PC-9 (cell line): ENCODE measurements at regions of chr9 and their contacts with region 1.

Region 1: GRCh38 chr9:113410207-113410864 is at the starts of genes C9orf43 and POLE3:
- DNase-seq: peak; percentile 87 to 95
- H3K4me3 ChIP-seq: peak within 1 kb of the TSS; percentile 76
- H3K27ac ChIP-seq: peak within 1 kb of the TSS; percentile 89
- H3K4me1 ChIP-seq: peaks cover 18% of the 10 kb centered on the region
- H3K27me3 ChIP-seq: no peaks in the 10 kb centered on the region
- CTCF ChIP-seq: no peak
- total RNA-seq, gene C9orf43: 1.5 and 2.5 TPM in 2 replicates
- total RNA-seq, gene POLE3: 53.8 and 64.5 TPM in 2 replicates

Region 2: GRCh38 chr9:113221003-113221799 is 189.1 kb before region 1 on chr9 and contains the starts of genes FKBP15 and SLC31A1:
- CTCF ChIA-PET with region 1: interaction called, 5 read pairs
- POLR2A ChIA-PET with region 1: interaction called, 3 read pairs
- intact Hi-C with region 1: loop called (anchors 1 kb)
- DNase-seq: peak; percentile 95 to 99
- H3K4me3 ChIP-seq: peak within 1 kb of the TSS; percentile 79
- H3K27ac ChIP-seq: peak within 1 kb of the TSS; percentile 51
- H3K4me1 ChIP-seq: peaks cover 29% of the 10 kb centered on the region
- H3K27me3 ChIP-seq: no peaks in the 10 kb centered on the region
- CTCF ChIP-seq: no peak
- total RNA-seq, gene FKBP15: 23.3 and 33.5 TPM in 2 replicates
- total RNA-seq, gene SLC31A1: 24.9 and 27.2 TPM in 2 replicates

Region 3: GRCh38 chr9:113309204-113309813 is 101.0 kb before region 1 on chr9:
- CTCF ChIA-PET with region 1: interaction called, 3 read pairs
- POLR2A ChIA-PET with region 1: no interaction called
- intact Hi-C with region 1: loop called (anchors 1 kb)
- DNase-seq: peak; percentile 17 to 44
- H3K4me3 ChIP-seq: no peak overlapping the region
- H3K27ac ChIP-seq: no peak overlapping the region
- H3K4me1 ChIP-seq: no peaks in the 10 kb centered on the region; the same call in 1 of the 2 replicates
- H3K27me3 ChIP-seq: no peaks in the 10 kb centered on the region
- CTCF ChIP-seq: peak; percentile 82

Region 4: DNA sequence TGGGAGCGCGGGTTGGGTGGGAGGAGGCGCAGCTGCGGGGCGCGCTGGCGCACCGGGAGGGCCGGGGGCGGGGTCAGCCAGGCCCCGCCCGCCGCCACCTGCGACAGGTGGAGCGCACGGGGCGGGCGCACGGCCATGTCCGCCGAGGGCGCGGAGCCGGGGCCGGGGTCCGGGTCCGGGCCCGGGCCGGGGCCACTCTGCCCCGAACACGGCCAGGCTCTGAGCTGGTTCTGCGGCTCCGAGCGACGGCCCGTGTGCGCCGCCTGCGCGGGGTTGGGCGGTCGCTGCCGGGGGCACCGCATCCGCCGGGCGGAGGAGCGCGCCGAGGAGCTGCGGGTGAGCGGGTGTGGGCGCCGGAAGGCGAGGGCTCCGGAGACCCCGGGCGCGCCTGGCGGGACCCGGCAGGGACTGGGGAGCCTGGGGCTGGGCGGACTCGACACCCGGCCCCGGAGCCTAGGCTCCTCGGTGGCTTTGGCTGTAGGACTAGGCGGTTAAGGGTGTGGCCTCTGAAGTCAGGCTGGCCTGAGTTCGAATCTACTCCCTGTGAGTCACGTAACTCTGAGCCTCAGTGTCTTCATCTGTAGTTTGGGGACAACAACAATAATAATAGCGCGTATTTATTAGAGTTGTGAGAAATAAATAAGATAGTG is 60.8 kb before region 1 on chr9 and contains the start of gene BSPRY:
- CTCF ChIA-PET with region 1: interaction called, 4 read pairs
- POLR2A ChIA-PET with region 1: interaction called, 11 read pairs
- intact Hi-C with region 1: no loop called
- DNase-seq: peak in 1 of 2 experiments; percentile 59
- H3K4me3 ChIP-seq: peak within 1 kb of the TSS; percentile 96
- H3K27ac ChIP-seq: no peak within 1 kb of the TSS
- H3K4me1 ChIP-seq: peaks cover 38% of the 10 kb centered on the region
- H3K27me3 ChIP-seq: no peaks in the 10 kb centered on the region
- CTCF ChIP-seq: no peak
- total RNA-seq, gene BSPRY: 28.8 and 29.3 TPM in 2 replicates

Region 5: DNA sequence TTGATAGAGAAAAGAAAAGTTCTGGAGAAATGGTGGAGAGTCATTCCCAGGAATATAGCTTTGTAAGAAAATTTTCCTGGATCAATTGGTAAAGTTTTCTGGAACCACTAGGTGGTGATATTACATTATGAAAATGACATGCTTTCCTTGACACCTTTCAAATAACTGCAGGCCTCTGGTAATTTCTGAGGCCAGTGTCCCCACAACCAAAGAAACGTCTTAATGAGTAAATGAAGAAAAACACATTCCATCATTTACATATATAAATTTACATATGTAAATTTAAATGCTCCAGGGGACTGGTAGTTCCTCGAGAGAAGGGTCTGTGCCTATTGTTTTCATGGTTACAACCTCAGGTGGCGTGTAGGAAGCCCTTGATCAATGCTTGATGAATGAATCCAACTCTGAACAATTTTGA is 36.0 kb after region 1 on chr9:
- CTCF ChIA-PET with region 1: no interaction called
- POLR2A ChIA-PET with region 1: interaction called, 21 read pairs
- intact Hi-C with region 1: no loop called
- DNase-seq: no peak
- H3K4me3 ChIP-seq: no peak overlapping the region
- H3K27ac ChIP-seq: no peak overlapping the region
- H3K4me1 ChIP-seq: no peaks in the 10 kb centered on the region
- H3K27me3 ChIP-seq: no peaks in the 10 kb centered on the region
- CTCF ChIP-seq: peak; percentile 80